Activated CD4-positive, alpha-beta T cell treated with anti-CD3 and anti-CD28 coated beads for 36 hours (primary cell): ENCODE measurements at regions of chr19 and their contacts with region 1.

Region 1: GRCh38 chr19:42140125-42140754 is 8.0 kb upstream of the POU2F2 start:
- DNase-seq: peak; percentile 61
- ATAC-seq: peak; percentile 70
- H3K4me3 Mint-ChIP-seq: no peak overlapping the region
- H3K27ac Mint-ChIP-seq: no peak overlapping the region
- H3K4me1 Mint-ChIP-seq: peaks cover 6% of the 10 kb centered on the region
- H3K27me3 Mint-ChIP-seq: no peaks in the 10 kb centered on the region

Region 2: DNA sequence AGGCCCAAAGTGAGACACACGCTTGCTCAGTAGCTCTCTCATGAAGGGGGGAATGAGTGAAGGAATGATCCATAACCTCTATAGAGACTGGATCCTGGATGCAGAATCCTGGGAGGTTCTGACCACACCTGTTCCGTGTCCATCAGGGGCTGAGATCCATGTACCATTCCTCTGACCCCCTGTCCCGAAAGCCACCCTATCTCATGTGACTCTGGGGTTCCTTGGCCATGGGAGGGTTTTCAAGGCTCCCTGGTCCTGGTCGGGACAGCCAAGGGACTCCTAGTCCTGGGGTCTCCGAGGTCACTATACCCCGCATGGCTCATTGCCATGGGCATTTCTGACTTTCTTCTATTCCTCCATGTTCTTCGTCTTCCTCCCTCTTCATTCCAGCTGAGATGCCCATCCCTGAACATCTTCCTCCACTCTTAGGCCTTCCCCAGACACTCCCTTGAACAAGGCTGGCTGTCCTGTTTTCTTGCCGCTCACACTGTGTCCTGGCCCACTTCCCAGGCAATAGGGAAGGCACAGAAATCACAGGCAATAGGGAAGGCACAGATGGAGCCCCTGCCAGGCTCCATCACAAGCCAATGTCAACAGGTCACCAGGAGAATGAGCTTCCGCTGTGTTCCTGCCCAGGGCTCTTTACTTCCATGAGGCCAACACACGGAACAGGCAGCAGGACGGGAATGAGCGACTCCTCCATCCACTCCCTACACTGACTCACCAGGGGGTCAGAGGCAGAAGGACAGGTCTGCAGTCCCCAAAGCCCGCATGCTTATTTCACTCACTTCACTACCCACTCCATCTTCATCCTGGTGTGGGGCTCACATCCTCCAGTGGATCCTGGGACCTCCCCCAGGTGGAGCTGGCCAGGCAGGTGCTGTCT is 428.6 kb before region 1 on chr19:
- CTCF ChIA-PET with region 1: no interaction called
- POLR2A ChIA-PET with region 1: no interaction called
- intact Hi-C with region 1: no loop called
- DNase-seq: no peak
- ATAC-seq: no peak
- H3K4me3 Mint-ChIP-seq: no peak overlapping the region
- H3K27ac Mint-ChIP-seq: no peak overlapping the region
- H3K4me1 Mint-ChIP-seq: no peaks in the 10 kb centered on the region
- H3K27me3 Mint-ChIP-seq: peaks cover 29% of the 10 kb centered on the region

Region 3: DNA sequence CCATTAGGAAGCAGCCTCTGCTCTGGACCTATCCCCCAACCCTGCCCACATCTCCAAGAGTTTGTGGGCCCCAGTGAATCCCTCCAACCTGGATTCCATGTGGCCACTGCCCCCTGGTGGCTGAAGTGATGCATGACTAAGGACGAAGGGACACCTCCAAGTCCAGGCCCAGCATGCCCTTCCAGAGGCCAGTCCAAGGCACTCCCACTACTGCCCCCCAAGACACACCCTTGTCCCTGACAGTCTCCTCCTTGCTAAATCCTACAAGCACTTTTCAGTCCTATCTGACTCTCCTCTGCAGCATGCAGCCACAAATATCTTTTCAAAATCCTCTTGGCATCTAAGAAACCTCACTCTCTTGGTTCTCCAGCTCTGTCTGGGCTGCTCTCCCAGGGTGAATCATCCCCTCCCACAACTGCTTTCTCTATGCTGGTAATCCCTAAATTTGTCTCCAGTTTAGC is 44.2 kb after region 1 on chr19:
- CTCF ChIA-PET with region 1: interaction called, 13 read pairs
- POLR2A ChIA-PET with region 1: no interaction called
- intact Hi-C with region 1: no loop called
- DNase-seq: peak; percentile 86
- ATAC-seq: peak; percentile 82
- H3K4me3 Mint-ChIP-seq: no peak overlapping the region
- H3K27ac Mint-ChIP-seq: peak overlapping the region; percentile 6
- H3K4me1 Mint-ChIP-seq: peaks cover 31% of the 10 kb centered on the region
- H3K27me3 Mint-ChIP-seq: peaks cover 4% of the 10 kb centered on the region

Region 4: GRCh38 chr19:42286349-42287261 is 146.4 kb after region 1 on chr19:
- CTCF ChIA-PET with region 1: no interaction called
- POLR2A ChIA-PET with region 1: no interaction called
- intact Hi-C with region 1: no loop called
- DNase-seq: peak; percentile 14
- ATAC-seq: no peak
- H3K4me3 Mint-ChIP-seq: no peak overlapping the region
- H3K27ac Mint-ChIP-seq: peak overlapping the region; percentile 38
- H3K4me1 Mint-ChIP-seq: peaks cover 24% of the 10 kb centered on the region
- H3K27me3 Mint-ChIP-seq: no peaks in the 10 kb centered on the region